H1 (cell line): ENCODE measurements at regions of chr7 and their contacts with region 1.

Region 1: GRCh38 chr7:121752706-121753105 is 120.3 kb upstream of the PTPRZ1 start:
- DNase-seq: no peak
- H3K4me3 ChIP-seq: no peak overlapping the region
- H3K27ac ChIP-seq: no peak overlapping the region
- H3K4me1 ChIP-seq: peaks cover 0 to 8% (median 0%) of the 10 kb centered on the region in 4 experiments; a peak in 3 of 7 replicates
- H3K27me3 ChIP-seq: no peaks in the 10 kb centered on the region
- CTCF ChIP-seq: peak in 2 of 3 experiments; percentile 51 to 62; a peak in 3 of 4 replicates
- EP300 ChIP-seq: no peak
- POLR2A ChIP-seq: no peak
- RAD21 ChIP-seq: peak; percentile 76 to 80

Region 2: GRCh38 chr7:121741896-121742295 is 10.8 kb before region 1 on chr7:
- CTCF ChIA-PET with region 1: interaction called, 11 read pairs
- POLR2A ChIA-PET with region 1: interaction called, 3 read pairs
- DNase-seq: no peak
- H3K4me3 ChIP-seq: no peak overlapping the region
- H3K27ac ChIP-seq: no peak overlapping the region
- H3K4me1 ChIP-seq: 0 out of 7 replicates have a peak, but pooled peaks cover 0 to 2% (median 0%) of the 10 kb centered on the region in 4 experiments
- H3K27me3 ChIP-seq: no peaks in the 10 kb centered on the region
- CTCF ChIP-seq: no peak
- EP300 ChIP-seq: no peak
- POLR2A ChIP-seq: no peak
- RAD21 ChIP-seq: no peak